ENCODE measurements at regions of chr16 and their contacts with region 1.

Region 1: DNA sequence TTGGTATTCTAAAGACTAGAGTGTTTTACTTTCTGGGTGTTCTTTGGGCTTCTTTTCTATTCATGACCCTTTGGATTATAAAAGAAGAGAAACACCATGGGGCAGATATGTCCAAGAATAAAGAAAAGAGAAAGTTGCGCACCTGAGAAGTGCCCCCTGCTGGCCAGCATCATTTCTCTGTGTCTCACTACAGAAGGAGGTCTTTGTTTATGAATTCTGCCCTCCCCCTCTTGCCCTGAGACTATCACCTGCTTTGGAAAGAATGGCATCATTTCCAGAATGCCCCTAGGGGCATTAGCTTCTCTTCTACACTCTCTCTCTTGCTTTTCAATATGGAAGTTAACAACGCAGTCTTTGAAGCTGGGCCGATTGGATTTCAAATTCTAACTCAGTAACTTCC is 45.0 kb downstream of the CDH13 start:
- DNase-seq: peak; percentile 63
- ATAC-seq: no peak
- H3K4me3 Mint-ChIP-seq: no peak overlapping the region
- H3K27ac Mint-ChIP-seq: no peak overlapping the region
- H3K4me1 Mint-ChIP-seq: no peaks in the 10 kb centered on the region
- H3K27me3 Mint-ChIP-seq: no peaks in the 10 kb centered on the region
- CTCF ChIP-seq: peak; percentile 57

Region 2: DNA sequence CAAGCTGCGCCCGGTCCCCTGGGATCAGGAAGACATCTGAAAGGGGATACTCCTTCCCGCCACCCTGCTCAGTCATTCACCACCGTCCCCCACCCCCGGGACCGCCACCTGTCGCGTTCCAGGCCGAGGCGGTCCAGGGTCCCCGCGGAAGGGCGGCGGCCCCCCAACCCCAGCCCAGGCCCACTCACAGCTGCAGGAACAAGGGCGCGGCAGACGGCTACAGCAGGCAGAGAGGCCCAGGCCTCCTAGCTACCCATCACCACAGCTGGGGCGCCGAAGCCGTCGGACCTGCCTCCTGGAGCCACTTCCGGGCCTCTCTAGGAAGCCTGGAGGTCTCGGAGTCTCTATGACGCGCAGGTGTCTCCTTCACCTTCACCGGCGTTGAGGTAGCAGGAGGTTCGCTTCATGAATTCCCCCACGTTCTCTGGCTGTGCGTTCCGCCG is 660.5 kb before region 1 on chr16 and contains the start of gene SDR42E1:
- CTCF ChIA-PET with region 1: no interaction called
- POLR2A ChIA-PET with region 1: no interaction called
- intact Hi-C with region 1: no loop called
- DNase-seq: peak; percentile 81
- ATAC-seq: peak; percentile 94
- H3K4me3 Mint-ChIP-seq: peak within 1 kb of the TSS; percentile 85
- H3K27ac Mint-ChIP-seq: peak within 1 kb of the TSS; percentile 85
- H3K4me1 Mint-ChIP-seq: peaks cover 19% of the 10 kb centered on the region
- H3K27me3 Mint-ChIP-seq: peaks cover 11% of the 10 kb centered on the region
- CTCF ChIP-seq: no peak
- total RNA-seq, gene SDR42E1: 7.1 to 9.2 TPM

Region 3: GRCh38 chr16:82594114-82594513 is 77.6 kb before region 1 on chr16:
- CTCF ChIA-PET with region 1: no interaction called
- POLR2A ChIA-PET with region 1: no interaction called
- intact Hi-C with region 1: no loop called
- DNase-seq: no peak
- ATAC-seq: no peak
- H3K4me3 Mint-ChIP-seq: no peak overlapping the region
- H3K27ac Mint-ChIP-seq: no peak overlapping the region
- H3K4me1 Mint-ChIP-seq: no peaks in the 10 kb centered on the region
- H3K27me3 Mint-ChIP-seq: peaks cover 15% of the 10 kb centered on the region
- CTCF ChIP-seq: no peak

Region 4: DNA sequence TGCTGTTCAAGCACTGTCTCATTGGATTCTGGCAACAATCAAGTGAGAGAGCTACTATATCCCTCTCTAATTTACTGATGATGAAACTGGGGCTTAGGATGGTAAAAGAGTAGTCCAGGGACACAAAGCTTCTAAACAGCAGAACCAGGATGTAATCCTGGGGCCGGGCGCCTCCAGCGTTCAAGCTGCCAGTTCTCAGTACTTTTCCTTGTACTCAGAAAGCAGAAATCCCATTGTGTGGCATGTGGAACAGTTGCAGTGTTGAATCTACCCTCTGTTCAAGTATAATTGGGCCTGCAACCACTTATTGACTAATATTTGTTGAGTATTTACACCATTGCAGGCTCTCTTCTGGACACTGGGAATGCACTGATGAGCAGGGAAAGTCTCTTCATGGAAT is 59.5 kb before region 1 on chr16:
- CTCF ChIA-PET with region 1: no interaction called
- POLR2A ChIA-PET with region 1: no interaction called
- intact Hi-C with region 1: no loop called
- DNase-seq: no peak
- ATAC-seq: no peak
- H3K4me3 Mint-ChIP-seq: no peak overlapping the region
- H3K27ac Mint-ChIP-seq: no peak overlapping the region
- H3K4me1 Mint-ChIP-seq: no peaks in the 10 kb centered on the region
- H3K27me3 Mint-ChIP-seq: peaks cover 10% of the 10 kb centered on the region
- CTCF ChIP-seq: no peak

Region 5: GRCh38 chr16:82630688-82631087 is 41.1 kb before region 1 on chr16:
- CTCF ChIA-PET with region 1: interaction called, 12 read pairs
- POLR2A ChIA-PET with region 1: no interaction called
- intact Hi-C with region 1: no loop called
- DNase-seq: no peak
- ATAC-seq: no peak
- H3K4me3 Mint-ChIP-seq: no peak overlapping the region
- H3K27ac Mint-ChIP-seq: no peak overlapping the region
- H3K4me1 Mint-ChIP-seq: peaks cover 9% of the 10 kb centered on the region
- H3K27me3 Mint-ChIP-seq: peaks cover 40% of the 10 kb centered on the region
- CTCF ChIP-seq: no peak

Region 6: GRCh38 chr16:82639666-82640336 is 31.9 kb before region 1 on chr16:
- CTCF ChIA-PET with region 1: interaction called, 13 read pairs
- POLR2A ChIA-PET with region 1: interaction called, 3 read pairs
- intact Hi-C with region 1: no loop called
- DNase-seq: peak; percentile 78
- ATAC-seq: peak; percentile 69
- H3K4me3 Mint-ChIP-seq: no peak overlapping the region
- H3K27ac Mint-ChIP-seq: no peak overlapping the region
- H3K4me1 Mint-ChIP-seq: peaks cover 15% of the 10 kb centered on the region
- H3K27me3 Mint-ChIP-seq: peaks cover 6% of the 10 kb centered on the region
- CTCF ChIP-seq: peak; percentile 82

Region 7: DNA sequence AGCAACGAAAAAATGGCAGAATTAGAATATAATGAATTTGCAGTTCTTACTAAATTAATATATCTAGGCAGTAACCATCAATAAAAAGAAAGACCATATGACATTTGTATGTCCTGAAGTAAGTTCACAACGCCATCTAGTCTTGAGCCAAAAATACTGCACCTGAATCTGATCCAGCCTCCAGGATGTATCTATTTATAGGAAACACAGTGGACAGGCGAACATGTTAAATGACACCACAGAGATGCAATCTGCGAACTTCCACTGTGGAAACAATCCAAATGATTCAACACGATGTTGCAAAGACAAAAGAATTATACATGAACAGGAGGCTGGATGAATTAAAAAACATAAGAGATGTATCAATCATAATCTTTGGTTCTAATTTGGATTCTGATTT is 152.7 kb after region 1 on chr16:
- CTCF ChIA-PET with region 1: no interaction called
- POLR2A ChIA-PET with region 1: no interaction called
- intact Hi-C with region 1: no loop called
- DNase-seq: no peak
- ATAC-seq: no peak
- H3K4me3 Mint-ChIP-seq: no peak overlapping the region
- H3K27ac Mint-ChIP-seq: no peak overlapping the region
- H3K4me1 Mint-ChIP-seq: no peaks in the 10 kb centered on the region
- H3K27me3 Mint-ChIP-seq: peaks cover 5% of the 10 kb centered on the region
- CTCF ChIP-seq: no peak

Measured in activated CD8-positive, alpha-beta T cell treated with anti-CD3 and anti-CD28 coated beads for 36 hours (primary cell).